ENCODE measurements at regions of chr4 and their contacts with region 1.

Region 1: DNA sequence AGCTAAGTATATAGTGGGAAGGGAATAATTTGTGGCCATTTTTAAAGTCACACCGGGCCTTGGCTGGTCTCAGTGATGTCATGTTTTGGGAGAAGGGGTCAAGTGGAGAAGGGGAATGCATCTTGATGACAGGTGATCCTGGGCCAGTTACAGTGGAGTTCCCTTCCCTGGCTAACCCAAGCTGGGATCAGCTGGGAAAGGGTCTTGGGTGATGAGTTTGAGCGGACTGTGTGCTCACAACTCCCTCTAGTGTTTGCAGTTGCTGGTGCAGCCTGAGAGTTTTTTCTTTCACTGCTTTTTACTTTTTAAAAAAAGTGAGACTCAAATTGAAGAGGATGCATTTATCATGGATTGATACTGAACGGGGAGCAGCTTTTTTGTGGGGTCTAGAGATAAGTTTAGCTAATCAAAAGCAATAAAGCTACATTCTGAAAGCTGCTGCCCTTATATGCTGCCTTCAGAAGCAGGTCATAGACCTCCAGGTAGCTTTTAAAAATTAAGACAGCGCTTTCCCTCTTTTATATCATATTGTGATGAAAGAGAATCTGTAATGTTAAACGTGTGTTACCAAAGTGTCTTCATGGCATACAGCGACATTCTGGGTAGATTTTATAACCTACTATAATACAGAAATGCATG is 164.7 kb downstream of the DCLK2 start:
- DNase-seq: peak; percentile 53
- CTCF ChIP-seq: peak; percentile 84

Region 2: GRCh38 chr4:149999485-150000074 is 243.4 kb before region 1 on chr4:
- CTCF ChIA-PET with region 1: interaction called, 14 read pairs
- POLR2A ChIA-PET with region 1: no interaction called
- DNase-seq: peak; percentile 9
- CTCF ChIP-seq: peak; percentile 45

Region 3: DNA sequence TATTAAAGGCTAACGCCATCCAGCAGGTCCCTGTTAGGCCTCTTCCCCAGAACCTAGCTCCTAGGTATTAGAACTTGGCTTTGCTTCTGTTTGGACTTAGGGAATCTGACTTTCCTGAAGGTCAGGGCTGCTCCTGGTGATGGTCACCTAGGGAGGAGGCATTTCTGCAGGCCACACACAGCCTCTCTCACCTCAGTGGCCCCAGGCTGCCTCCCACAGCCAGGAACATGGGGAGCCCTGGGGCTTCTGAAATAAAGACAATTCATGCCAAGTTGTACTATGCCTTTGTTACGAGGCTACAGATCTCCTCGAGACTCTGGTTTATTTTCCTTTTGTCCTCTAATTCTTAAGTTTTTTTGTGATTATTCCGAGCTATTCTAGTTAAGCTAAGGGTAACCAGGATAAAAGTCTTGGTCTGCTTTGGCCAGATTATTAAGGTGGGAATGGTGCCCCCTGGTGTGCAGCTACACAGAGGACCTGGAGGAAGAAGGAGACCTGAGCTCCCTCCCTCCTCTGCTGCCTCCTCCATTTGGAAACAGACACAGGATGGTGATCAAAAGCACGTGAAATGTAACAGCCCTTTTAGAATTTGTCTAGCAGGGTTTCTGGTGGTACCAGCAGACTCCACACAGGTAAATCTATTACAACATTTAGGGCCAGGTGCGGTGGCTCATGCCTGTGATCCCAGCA is 33.7 kb before region 1 on chr4:
- CTCF ChIA-PET with region 1: interaction called, 10 read pairs
- POLR2A ChIA-PET with region 1: no interaction called
- DNase-seq: peak; percentile 52
- CTCF ChIP-seq: peak; percentile 62

Region 4: GRCh38 chr4:150256841-150257730 is 14.1 kb after region 1 on chr4:
- CTCF ChIA-PET with region 1: interaction called, 37 read pairs
- POLR2A ChIA-PET with region 1: no interaction called
- DNase-seq: no peak
- CTCF ChIP-seq: no peak

Measured in GM10248 (cell line).